ENCODE measurements at regions of chr5 and their contacts with region 1.

Region 1: GRCh38 chr5:32585446-32586275 is at the start of gene SUB1:
- DNase-seq: peak; percentile 91 to 95 (median 93)
- H3K4me3 ChIP-seq: peak within 1 kb of the TSS; percentile 93
- H3K4me3 Mint-ChIP-seq: peak within 1 kb of the TSS; percentile 90 to 100 (median 98)
- H3K27ac ChIP-seq: peak within 1 kb of the TSS; percentile 100
- H3K27ac Mint-ChIP-seq: peak within 1 kb of the TSS; percentile 95 to 100 (median 98)
- H3K4me1 ChIP-seq: peaks cover 53% of the 10 kb centered on the region
- H3K4me1 Mint-ChIP-seq: peaks cover 65 to 86% (median 83%) of the 10 kb centered on the region in 3 donors
- H3K27me3 ChIP-seq: no peaks in the 10 kb centered on the region
- H3K27me3 Mint-ChIP-seq: peaks cover 0 to 2% of the 10 kb centered on the region in 2 donors
- total RNA-seq, gene SUB1: 484 to 511 TPM

Region 2: DNA sequence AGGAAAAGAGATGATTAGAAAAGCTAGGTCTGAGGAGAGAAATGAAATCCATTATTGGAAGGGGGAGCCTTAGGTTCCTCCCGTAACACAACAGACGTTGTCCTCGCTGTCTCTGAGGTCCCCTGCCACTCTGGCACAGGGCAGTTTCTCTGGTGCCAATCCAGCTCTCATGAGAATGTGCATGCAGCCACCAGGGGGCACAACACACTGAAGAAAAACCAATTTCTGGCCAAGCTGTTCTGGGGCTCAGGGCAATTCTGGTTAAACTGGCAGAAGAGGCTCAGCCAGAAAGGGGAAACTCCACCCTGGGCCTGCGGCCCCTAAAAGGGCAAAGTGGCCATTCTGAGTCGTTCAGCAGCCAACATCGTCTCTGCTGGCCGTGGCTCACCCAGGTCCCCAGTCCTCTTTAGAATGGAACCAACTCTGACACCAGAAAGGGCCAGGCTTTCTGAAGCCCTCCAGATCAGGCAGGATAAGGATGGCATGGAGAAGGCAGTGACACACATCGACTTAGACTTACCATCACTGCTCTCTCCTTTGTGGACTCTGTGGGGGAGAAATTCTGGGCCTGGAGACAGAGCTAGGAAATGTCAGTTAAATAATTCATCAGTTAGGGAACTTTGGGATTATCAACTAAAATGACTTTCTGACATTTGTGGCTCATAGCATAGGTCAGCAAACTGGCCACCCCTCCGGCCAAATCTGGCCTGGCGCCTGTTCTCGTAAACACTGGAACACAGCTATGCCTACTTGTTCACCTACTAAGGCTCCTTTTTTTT is 353.0 kb before region 1 on chr5:
- CTCF ChIA-PET with region 1: interaction called, 12 read pairs
- POLR2A ChIA-PET with region 1: interaction called, 4 read pairs
- DNase-seq: peak; percentile 56 to 82 (median 60)
- H3K4me3 ChIP-seq: no peak overlapping the region
- H3K4me3 Mint-ChIP-seq: peak overlapping the region in 1 of 7 donors; percentile 56
- H3K27ac ChIP-seq: no peak overlapping the region
- H3K27ac Mint-ChIP-seq: peak overlapping the region; percentile 6 to 94 (median 64)
- H3K4me1 ChIP-seq: no peaks in the 10 kb centered on the region
- H3K4me1 Mint-ChIP-seq: peaks cover 5 to 8% (median 6%) of the 10 kb centered on the region in 3 donors
- H3K27me3 ChIP-seq: no peaks in the 10 kb centered on the region
- H3K27me3 Mint-ChIP-seq: no peaks in the 10 kb centered on the region

Region 3: GRCh38 chr5:32489791-32490582 is 95.7 kb before region 1 on chr5:
- CTCF ChIA-PET with region 1: interaction called, 174 read pairs
- POLR2A ChIA-PET with region 1: interaction called, 7 read pairs
- DNase-seq: peak; percentile 52 to 78 (median 58)
- H3K4me3 ChIP-seq: no peak overlapping the region
- H3K4me3 Mint-ChIP-seq: no peak overlapping the region
- H3K27ac ChIP-seq: no peak overlapping the region
- H3K27ac Mint-ChIP-seq: no peak overlapping the region
- H3K4me1 ChIP-seq: no peaks in the 10 kb centered on the region
- H3K4me1 Mint-ChIP-seq: no peaks in the 10 kb centered on the region
- H3K27me3 ChIP-seq: no peaks in the 10 kb centered on the region
- H3K27me3 Mint-ChIP-seq: peaks cover 0 to 1% of the 10 kb centered on the region in 2 donors

Region 4: GRCh38 chr5:32498484-32498883 is 87.2 kb before region 1 on chr5:
- CTCF ChIA-PET with region 1: interaction called, 11 read pairs
- POLR2A ChIA-PET with region 1: interaction called, 7 read pairs
- DNase-seq: no peak
- H3K4me3 ChIP-seq: no peak overlapping the region
- H3K4me3 Mint-ChIP-seq: no peak overlapping the region
- H3K27ac ChIP-seq: no peak overlapping the region
- H3K27ac Mint-ChIP-seq: no peak overlapping the region
- H3K4me1 ChIP-seq: no peaks in the 10 kb centered on the region
- H3K4me1 Mint-ChIP-seq: peaks cover 0 to 11% (median 0%) of the 10 kb centered on the region in 3 donors
- H3K27me3 ChIP-seq: no peaks in the 10 kb centered on the region
- H3K27me3 Mint-ChIP-seq: peaks cover 6 to 14% of the 10 kb centered on the region in 2 donors

Region 5: GRCh38 chr5:32531885-32532520 is 53.7 kb before region 1 on chr5:
- CTCF ChIA-PET with region 1: interaction called, 10 read pairs
- POLR2A ChIA-PET with region 1: interaction called, 12 read pairs
- DNase-seq: peak; percentile 7 to 74 (median 39)
- H3K4me3 ChIP-seq: peak overlapping the region; percentile 49
- H3K4me3 Mint-ChIP-seq: peak overlapping the region; percentile 81 to 95 (median 90)
- H3K27ac ChIP-seq: peak overlapping the region; percentile 76
- H3K27ac Mint-ChIP-seq: peak overlapping the region; percentile 82 to 98 (median 92)
- H3K4me1 ChIP-seq: peaks cover 29% of the 10 kb centered on the region
- H3K4me1 Mint-ChIP-seq: peaks cover 24 to 58% (median 52%) of the 10 kb centered on the region in 3 donors
- H3K27me3 ChIP-seq: no peaks in the 10 kb centered on the region
- H3K27me3 Mint-ChIP-seq: no peaks in the 10 kb centered on the region

Region 6: GRCh38 chr5:32613050-32613672 is 27.5 kb after region 1 on chr5:
- CTCF ChIA-PET with region 1: interaction called, 10 read pairs
- POLR2A ChIA-PET with region 1: interaction called, 3 read pairs
- DNase-seq: peak; percentile 63 to 84 (median 73)
- H3K4me3 ChIP-seq: no peak overlapping the region
- H3K4me3 Mint-ChIP-seq: no peak overlapping the region
- H3K27ac ChIP-seq: no peak overlapping the region
- H3K27ac Mint-ChIP-seq: peak overlapping the region in 3 of 8 donors; percentile 1 to 16 (median 13)
- H3K4me1 ChIP-seq: peaks cover 6% of the 10 kb centered on the region
- H3K4me1 Mint-ChIP-seq: peaks cover 4 to 14% (median 11%) of the 10 kb centered on the region in 3 donors
- H3K27me3 ChIP-seq: no peaks in the 10 kb centered on the region
- H3K27me3 Mint-ChIP-seq: no peaks in the 10 kb centered on the region

Region 7: DNA sequence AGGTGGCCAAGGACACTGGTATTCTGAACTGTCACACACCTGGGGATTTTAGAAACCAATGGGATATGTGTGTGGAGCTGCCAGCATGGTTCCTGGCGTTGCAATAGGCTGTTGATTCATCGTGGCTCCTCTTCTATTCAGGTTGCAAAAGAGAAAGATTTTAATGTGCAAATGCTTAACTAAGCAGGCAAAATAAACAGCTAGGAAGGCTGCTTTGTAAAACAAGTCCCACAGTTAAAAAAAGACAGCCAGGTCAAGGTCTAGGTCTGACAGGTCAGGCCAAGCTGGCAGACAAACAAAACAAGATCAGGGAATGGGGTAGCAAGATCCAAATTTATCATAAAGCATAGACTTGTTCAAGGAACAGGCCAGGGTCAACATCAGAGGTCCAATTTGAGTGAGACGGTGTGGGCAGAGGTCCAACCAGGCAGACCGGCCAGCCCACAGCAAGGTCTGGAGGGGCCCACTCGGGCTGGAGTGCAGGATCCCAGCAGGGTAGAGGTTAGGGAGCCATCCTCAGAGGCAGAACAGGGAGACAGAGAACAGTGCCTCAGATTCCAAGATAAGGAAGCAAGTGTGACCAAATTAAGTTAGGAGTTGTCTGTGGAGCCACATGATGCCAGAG is 45.3 kb after region 1 on chr5:
- CTCF ChIA-PET with region 1: no interaction called
- POLR2A ChIA-PET with region 1: no interaction called
- DNase-seq: no peak
- H3K4me3 ChIP-seq: no peak overlapping the region
- H3K4me3 Mint-ChIP-seq: no peak overlapping the region
- H3K27ac ChIP-seq: no peak overlapping the region
- H3K27ac Mint-ChIP-seq: no peak overlapping the region
- H3K4me1 ChIP-seq: no peaks in the 10 kb centered on the region
- H3K4me1 Mint-ChIP-seq: no peaks in the 10 kb centered on the region
- H3K27me3 ChIP-seq: no peaks in the 10 kb centered on the region
- H3K27me3 Mint-ChIP-seq: peaks cover 11 to 12% of the 10 kb centered on the region in 2 donors